Activated CD8-positive, alpha-beta T cell treated with anti-CD3 and anti-CD28 coated beads, Interleukin-2, amount 10 ng/mL, durations not matched to agents 7 days and 5 days (primary cell): ENCODE measurements at regions of chr12 and their contacts with region 1.

Region 1: DNA sequence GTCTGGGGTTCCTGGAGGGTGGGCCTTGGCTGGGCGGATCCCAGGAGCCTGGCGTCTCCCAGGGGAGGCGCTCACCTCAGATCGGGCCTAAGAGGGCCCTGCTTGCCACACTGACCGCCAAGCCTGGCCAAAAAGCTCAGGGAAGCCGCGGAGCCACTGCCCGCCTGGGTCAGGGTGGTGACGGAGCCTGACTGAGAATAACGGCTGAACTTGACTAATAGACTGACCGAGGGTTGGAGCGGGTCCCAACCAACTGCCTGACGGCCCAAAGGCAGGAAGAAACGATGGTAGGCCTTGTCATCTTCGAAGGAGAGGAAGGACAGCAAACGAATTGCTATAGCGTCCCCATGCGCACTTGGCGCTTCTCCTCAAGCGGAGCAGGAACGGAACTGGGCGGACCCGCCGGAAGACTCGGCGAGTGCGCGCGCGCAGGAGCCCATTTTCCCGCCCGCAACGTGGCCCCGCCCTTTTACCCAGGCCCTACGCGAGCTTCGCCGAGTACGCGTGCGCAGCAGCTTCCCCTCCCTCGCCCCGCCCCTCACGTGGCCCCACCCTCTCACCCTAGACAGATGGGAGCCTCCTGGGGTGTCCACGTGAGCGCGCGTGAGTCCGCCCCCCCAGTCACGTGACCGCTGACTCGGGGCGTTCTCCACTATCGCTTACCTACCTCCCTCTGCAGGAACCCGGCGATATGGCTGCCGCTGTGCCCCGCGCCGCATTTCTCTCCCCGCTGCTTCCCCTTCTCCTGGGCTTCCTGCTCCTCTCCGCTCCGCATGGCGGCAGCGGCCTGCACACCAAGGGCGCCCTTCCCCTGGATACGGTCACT is at the starts of genes ERP29 and TMEM116:
- DNase-seq: peak; percentile 100
- ATAC-seq: peak; percentile 88
- H3K4me3 Mint-ChIP-seq: peak within 1 kb of the TSS; percentile 92
- H3K27ac Mint-ChIP-seq: peak within 1 kb of the TSS; percentile 95
- H3K4me1 Mint-ChIP-seq: peaks cover 52% of the 10 kb centered on the region
- H3K27me3 Mint-ChIP-seq: no peaks in the 10 kb centered on the region
- total RNA-seq, gene ERP29: 134 to 145 TPM
- total RNA-seq, gene TMEM116: 12.7 to 13.1 TPM

Region 2: DNA sequence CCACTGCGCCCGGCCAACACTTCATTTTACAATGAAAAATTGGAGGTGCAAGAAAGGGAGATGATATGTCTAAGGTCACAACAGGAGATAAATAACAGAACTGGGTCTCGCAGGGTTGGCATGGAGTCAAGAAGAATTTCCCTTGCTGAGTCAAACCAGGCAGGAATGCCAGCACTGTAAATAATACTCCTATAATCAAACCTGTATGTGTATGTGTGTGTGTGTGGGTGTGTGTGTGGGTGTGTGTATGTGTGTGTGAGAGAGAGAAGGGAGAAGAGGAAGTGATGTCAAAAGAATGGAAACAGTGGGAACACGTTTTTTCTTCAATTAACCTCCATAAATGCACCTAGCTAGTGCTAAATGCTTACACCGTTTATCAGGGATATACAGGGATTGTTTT is 70.4 kb before region 1 on chr12:
- CTCF ChIA-PET with region 1: interaction called, 63 read pairs
- POLR2A ChIA-PET with region 1: interaction called, 7 read pairs
- DNase-seq: no peak
- ATAC-seq: no peak
- H3K4me3 Mint-ChIP-seq: no peak overlapping the region
- H3K27ac Mint-ChIP-seq: no peak overlapping the region
- H3K4me1 Mint-ChIP-seq: peaks cover 14% of the 10 kb centered on the region
- H3K27me3 Mint-ChIP-seq: no peaks in the 10 kb centered on the region

Region 3: GRCh38 chr12:111953455-111953854 is 59.5 kb before region 1 on chr12:
- CTCF ChIA-PET with region 1: interaction called, 14 read pairs
- POLR2A ChIA-PET with region 1: interaction called, 19 read pairs
- DNase-seq: no peak
- ATAC-seq: no peak
- H3K4me3 Mint-ChIP-seq: no peak overlapping the region
- H3K27ac Mint-ChIP-seq: no peak overlapping the region
- H3K4me1 Mint-ChIP-seq: peaks cover 19% of the 10 kb centered on the region
- H3K27me3 Mint-ChIP-seq: no peaks in the 10 kb centered on the region

Region 4: DNA sequence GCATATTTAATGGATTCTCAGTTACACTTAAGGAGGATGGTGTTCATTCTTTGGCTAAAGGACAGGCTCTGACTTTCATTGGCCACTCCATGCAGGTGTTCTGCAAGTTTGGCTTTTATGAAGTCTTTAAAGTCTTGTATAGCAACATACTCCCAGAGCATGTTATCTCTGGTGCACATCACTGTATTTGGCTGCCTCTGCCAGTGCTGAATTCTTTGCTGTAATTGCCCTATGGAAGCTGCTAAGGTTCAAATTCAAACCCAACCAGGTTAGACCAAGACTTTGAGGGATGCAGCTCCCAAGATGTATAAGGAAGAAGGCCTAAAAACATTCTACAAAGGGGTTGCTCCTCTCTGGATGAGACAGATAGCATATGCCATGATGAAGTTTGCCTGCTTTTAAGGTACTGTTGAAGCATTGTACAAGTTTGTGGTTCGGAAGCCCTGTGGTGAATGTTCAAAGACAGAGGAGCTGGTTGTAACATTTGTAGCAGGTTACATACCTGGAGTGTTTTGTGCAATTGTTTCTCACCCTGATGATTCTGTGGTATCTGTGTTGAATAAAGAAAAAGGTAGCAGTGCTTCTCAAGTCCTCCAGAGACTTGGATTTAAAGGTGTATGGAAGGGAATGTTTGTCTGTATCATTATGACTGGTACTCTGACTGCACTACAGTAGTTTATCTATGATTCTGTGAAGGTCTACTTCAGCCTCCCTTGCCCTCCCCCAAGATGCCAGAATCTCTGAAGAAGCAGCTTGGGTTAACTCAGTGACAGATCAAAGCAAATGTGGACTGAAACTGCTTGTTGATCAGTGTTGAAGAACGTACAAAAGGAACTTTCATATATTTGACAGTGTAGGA is 19.5 kb before region 1 on chr12:
- CTCF ChIA-PET with region 1: interaction called, 50 read pairs
- POLR2A ChIA-PET with region 1: interaction called, 91 read pairs
- DNase-seq: peak; percentile 59
- ATAC-seq: peak; percentile 79
- H3K4me3 Mint-ChIP-seq: peak overlapping the region; percentile 79
- H3K27ac Mint-ChIP-seq: peak overlapping the region; percentile 88
- H3K4me1 Mint-ChIP-seq: peaks cover 54% of the 10 kb centered on the region
- H3K27me3 Mint-ChIP-seq: no peaks in the 10 kb centered on the region

Region 5: DNA sequence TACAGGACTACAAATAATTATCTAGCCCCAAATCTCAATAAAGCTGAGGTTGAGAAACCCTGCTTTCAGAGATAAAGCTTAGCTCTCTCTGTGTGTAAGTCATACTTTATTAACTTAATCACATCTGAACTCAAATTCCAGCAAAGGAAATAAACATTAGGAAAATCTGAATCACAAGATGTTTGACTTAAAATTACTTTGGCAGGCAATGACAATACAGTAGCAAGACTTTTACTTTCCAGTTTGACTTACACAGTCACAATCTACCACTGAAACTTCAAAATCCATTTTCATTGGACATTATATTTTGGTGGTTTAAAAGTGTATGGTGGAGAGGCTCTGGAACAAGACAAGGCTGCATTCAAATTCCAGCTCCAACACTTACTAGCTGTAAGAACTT is 11.4 kb before region 1 on chr12:
- CTCF ChIA-PET with region 1: interaction called, 39 read pairs
- POLR2A ChIA-PET with region 1: interaction called, 49 read pairs
- DNase-seq: no peak
- ATAC-seq: peak; percentile 45
- H3K4me3 Mint-ChIP-seq: peak overlapping the region; percentile 52
- H3K27ac Mint-ChIP-seq: peak overlapping the region; percentile 64
- H3K4me1 Mint-ChIP-seq: peaks cover 54% of the 10 kb centered on the region
- H3K27me3 Mint-ChIP-seq: no peaks in the 10 kb centered on the region

Region 6: GRCh38 chr12:112130441-112130998 is 117.5 kb after region 1 on chr12:
- CTCF ChIA-PET with region 1: interaction called, 17 read pairs
- POLR2A ChIA-PET with region 1: interaction called, 12 read pairs
- DNase-seq: no peak
- ATAC-seq: peak; percentile 61
- H3K4me3 Mint-ChIP-seq: peak overlapping the region; percentile 56
- H3K27ac Mint-ChIP-seq: peak overlapping the region; percentile 87
- H3K4me1 Mint-ChIP-seq: peaks cover 55% of the 10 kb centered on the region
- H3K27me3 Mint-ChIP-seq: no peaks in the 10 kb centered on the region